Activated B cell treated with CpG ODN at 0.5 μM for 24 hours (primary cell): ENCODE measurements at regions of chr1 and their contacts with region 1.

Region 1: DNA sequence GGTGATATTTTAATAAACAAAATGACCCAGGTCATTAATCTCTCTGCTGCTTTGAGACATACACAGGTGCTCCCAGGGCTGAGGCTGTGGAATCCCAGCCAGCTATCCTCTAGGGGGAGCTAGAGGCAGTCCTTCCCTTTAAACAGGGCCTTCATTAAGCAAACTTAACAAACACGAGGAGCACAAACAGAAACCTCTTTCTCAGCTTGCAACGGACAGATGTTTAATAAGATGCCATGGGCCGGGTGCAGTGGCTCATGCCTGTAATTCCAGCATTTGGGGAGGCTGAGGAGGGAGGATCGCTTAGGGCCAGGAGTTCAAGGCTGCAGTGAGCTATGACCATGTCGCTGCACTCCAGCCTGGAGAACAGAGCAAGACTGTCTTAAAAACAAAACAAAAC is 106.7 kb downstream of the HIVEP3 start:
- DNase-seq: no peak
- ATAC-seq: peak; percentile 34
- H3K4me3 Mint-ChIP-seq: no peak overlapping the region
- H3K27ac Mint-ChIP-seq: no peak overlapping the region
- H3K4me1 Mint-ChIP-seq: peaks cover 35% of the 10 kb centered on the region
- H3K27me3 Mint-ChIP-seq: no peaks in the 10 kb centered on the region
- CTCF ChIP-seq: no peak

Region 2: GRCh38 chr1:41800246-41800902 is 11.7 kb before region 1 on chr1:
- CTCF ChIA-PET with region 1: interaction called, 3 read pairs
- POLR2A ChIA-PET with region 1: interaction called, 4 read pairs
- intact Hi-C with region 1: loop called (anchors 1 kb)
- DNase-seq: no peak
- ATAC-seq: peak; percentile 73
- H3K4me3 Mint-ChIP-seq: peak overlapping the region; percentile 39
- H3K27ac Mint-ChIP-seq: no peak overlapping the region
- H3K4me1 Mint-ChIP-seq: peaks cover 60% of the 10 kb centered on the region
- H3K27me3 Mint-ChIP-seq: no peaks in the 10 kb centered on the region
- CTCF ChIP-seq: no peak

Region 3: DNA sequence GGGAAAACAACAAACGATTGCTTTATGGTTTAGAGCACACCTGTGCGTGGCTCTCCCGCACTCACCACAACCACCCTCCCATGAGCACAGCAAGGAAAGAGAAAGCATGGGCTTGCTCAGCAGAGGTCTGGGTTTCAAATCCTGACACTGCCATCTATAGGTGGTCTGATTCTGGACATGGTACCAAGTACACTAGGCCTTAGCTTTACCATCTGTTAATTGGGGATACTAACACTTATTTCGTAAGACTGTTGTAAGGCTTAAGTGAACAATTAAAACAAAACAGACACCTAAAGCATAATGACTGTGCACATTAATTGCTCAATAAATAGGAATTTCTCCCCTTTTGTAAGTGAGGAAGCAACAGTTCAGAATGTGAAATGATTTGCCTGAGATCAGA is 56.5 kb after region 1 on chr1:
- CTCF ChIA-PET with region 1: interaction called, 3 read pairs
- POLR2A ChIA-PET with region 1: no interaction called
- intact Hi-C with region 1: loop called (anchors 5 kb)
- DNase-seq: no peak
- ATAC-seq: peak; percentile 74
- H3K4me3 Mint-ChIP-seq: no peak overlapping the region
- H3K27ac Mint-ChIP-seq: peak overlapping the region; percentile 4
- H3K4me1 Mint-ChIP-seq: peaks cover 23% of the 10 kb centered on the region
- H3K27me3 Mint-ChIP-seq: no peaks in the 10 kb centered on the region
- CTCF ChIP-seq: no peak

Region 4: DNA sequence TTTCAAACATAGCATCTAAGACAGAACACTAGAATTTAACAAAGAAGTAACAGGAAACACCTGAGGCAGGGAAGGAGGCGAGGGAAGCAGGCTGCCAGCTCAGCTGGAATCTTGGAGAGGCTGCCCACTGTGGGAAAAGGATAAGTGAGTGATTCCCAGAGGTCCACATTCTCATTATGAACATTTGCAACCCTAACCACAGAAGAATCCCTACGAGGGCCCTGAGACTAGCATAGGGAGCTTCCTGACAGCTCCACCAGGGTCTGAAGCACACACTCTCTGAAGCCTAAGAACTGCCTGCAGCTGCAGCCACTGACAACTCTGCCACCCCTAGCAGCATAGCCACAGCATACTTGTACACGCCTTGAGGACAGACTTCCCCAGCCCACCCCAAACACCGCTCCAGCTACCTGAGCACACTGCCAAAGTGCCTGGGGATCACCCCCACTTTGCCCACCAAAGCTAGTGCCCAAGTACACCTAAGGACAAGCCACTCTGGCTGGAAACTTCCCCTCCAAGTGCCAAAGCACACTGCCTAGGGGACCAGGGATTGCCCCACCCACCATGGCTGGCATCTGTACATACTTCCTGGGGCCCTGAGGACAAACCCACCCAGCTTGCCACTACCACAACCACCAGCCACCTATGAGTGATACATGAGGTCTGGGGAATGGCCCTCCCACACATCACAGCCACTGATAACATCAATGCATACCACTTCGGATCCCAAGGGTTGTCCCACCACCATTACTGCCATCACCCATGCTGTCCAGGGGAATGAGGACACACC is 429.1 kb after region 1 on chr1:
- CTCF ChIA-PET with region 1: no interaction called
- POLR2A ChIA-PET with region 1: no interaction called
- intact Hi-C with region 1: no loop called
- DNase-seq: no peak
- ATAC-seq: no peak
- H3K4me3 Mint-ChIP-seq: no peak overlapping the region
- H3K27ac Mint-ChIP-seq: no peak overlapping the region
- H3K4me1 Mint-ChIP-seq: peaks cover 32% of the 10 kb centered on the region
- H3K27me3 Mint-ChIP-seq: no peaks in the 10 kb centered on the region
- CTCF ChIP-seq: no peak